ENCODE measurements at regions of chr4 and their contacts with region 1.

Region 1: DNA sequence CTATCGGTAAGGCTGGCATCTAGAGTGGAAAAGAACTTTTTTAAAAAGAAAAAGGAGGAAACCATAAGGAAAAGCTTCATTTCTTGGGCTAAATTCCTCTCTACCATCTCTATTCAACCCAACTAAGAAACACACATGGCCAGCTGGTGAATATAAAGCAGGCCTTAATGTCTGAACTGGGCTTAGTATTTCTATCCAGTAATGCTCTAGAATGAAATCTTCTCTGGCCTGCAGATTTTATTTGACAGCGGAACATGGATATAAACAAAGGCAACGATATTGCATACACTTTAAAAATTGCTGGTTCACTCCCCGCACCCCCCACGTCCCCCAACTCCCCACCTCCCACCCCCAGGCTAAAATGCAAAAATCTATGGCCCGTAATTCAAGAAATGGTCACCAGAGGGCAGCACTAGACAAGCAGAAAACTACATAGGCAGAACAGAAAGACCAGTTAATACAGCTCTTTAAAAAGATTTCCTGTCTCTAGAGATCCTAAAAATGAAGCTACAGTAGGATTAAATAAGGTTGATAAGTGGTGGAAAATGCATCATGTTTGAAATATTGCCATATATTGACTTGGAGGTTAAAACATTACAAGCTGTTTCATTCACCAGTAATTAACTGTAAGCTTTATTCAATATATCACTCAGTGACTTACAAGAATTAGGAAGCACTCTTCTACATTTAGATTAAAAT is 155.2 kb upstream of the GALNT7 start:
- DNase-seq: peak in 4 of 5 donors; percentile 16 to 51 (median 30)
- H3K4me3 ChIP-seq: no peak overlapping the region
- H3K27ac ChIP-seq: no peak overlapping the region
- H3K4me1 ChIP-seq: no peaks in the 10 kb centered on the region
- H3K27me3 ChIP-seq: no peaks in the 10 kb centered on the region
- CTCF ChIP-seq: peak in 2 of 3 donors; percentile 45 to 59
- EP300 ChIP-seq: no peak
- POLR2A ChIP-seq: no peak

Region 2: DNA sequence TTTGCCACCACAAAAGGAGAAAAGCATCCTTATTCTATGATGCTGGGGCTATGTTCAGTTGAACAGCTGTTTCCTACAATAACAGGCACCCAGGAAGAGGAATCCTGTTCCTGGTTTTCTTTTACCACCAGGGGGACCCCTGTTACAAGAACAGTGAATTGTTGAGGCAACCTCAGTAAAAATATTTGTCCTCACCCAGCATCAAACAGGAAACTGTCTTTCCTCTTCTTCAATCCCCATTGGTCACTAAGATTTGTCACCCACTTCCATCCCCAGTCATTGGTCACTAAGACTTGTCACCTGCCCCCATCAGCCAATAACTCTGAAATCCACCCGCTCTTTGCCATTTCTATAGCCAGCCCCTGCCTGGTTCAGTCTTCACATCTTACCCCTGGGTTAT is 11.8 kb after region 1 on chr4:
- intact Hi-C with region 1: no loop called
- DNase-seq: peak in 2 of 5 donors; percentile 39 to 66
- H3K4me3 ChIP-seq: no peak overlapping the region
- H3K27ac ChIP-seq: no peak overlapping the region
- H3K4me1 ChIP-seq: no peaks in the 10 kb centered on the region
- H3K27me3 ChIP-seq: no peaks in the 10 kb centered on the region
- CTCF ChIP-seq: peak; percentile 33 to 69 (median 61)
- EP300 ChIP-seq: no peak
- POLR2A ChIP-seq: no peak

Region 3: GRCh38 chr4:173257732-173258717 is 244.6 kb after region 1 on chr4:
- intact Hi-C with region 1: loop called in 3 of 4 experiments (anchors 5 to 10 kb)
- DNase-seq: peak; percentile 52 to 72 (median 71)
- H3K4me3 ChIP-seq: no peak overlapping the region
- H3K27ac ChIP-seq: no peak overlapping the region
- H3K4me1 ChIP-seq: no peaks in the 10 kb centered on the region
- H3K27me3 ChIP-seq: no peaks in the 10 kb centered on the region
- CTCF ChIP-seq: peak; percentile 19 to 57 (median 44)
- EP300 ChIP-seq: no peak
- POLR2A ChIP-seq: no peak

Region 4: DNA sequence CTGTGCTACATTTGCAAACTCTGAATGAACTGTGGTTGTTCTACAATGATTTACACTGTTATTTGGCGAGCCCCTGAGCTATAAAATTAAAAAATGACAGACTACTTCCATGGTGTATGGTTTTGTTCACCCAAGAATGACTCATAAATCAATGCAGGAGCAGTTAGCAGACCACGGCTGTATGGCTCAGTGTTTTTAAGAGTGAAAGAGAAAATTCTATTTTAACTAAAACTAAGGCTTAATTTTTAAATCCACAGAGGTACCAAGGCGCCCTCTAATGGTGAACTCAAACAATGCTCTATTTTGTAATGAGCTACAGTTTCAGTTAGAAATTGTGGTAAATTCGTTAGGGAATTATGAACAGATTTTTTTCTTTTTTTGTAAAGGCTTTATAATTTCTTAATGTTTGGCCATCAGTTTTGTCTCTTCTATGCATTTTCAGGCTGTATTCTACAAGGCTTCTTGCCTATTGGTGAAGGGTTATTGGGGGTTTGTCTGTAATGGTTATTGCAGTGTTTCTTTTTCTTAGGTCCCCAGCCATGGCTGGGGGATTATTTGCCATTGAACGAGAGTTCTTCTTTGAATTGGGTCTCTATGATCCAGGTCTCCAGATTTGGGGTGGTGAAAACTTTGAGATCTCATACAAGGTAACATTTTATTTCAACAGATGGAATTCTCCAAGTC is 288.3 kb after region 1 on chr4:
- intact Hi-C with region 1: loop called in 2 of 4 experiments (anchors 5 to 10 kb)
- DNase-seq: no peak
- H3K4me3 ChIP-seq: no peak overlapping the region
- H3K27ac ChIP-seq: no peak overlapping the region
- H3K4me1 ChIP-seq: no peaks in the 10 kb centered on the region
- H3K27me3 ChIP-seq: no peaks in the 10 kb centered on the region
- CTCF ChIP-seq: peak; percentile 49 to 61 (median 50)
- EP300 ChIP-seq: no peak
- POLR2A ChIP-seq: no peak

Region 5: DNA sequence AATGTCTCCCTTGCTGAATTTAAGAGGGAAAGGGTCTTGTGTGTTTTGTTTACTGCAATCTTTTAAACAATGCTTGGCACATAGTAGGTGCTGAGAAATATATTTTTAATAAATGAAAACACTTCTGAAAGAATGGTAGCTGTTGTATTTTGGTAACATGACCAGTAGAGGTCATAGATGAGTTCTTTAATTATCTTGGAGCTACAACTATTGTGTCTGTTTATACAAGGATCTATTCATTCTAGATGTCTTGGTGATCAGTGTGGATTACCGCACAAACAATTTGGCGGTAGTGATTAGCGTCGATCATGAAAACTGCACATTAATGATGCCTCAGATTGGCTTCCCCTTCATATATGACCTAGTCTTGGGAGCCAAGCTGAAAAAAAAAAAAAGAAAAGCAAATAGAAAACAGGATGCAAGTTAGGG is 407.0 kb after region 1 on chr4:
- intact Hi-C with region 1: loop called in 2 of 4 experiments (anchors 5 to 10 kb)
- DNase-seq: no peak
- H3K4me3 ChIP-seq: no peak overlapping the region
- H3K27ac ChIP-seq: no peak overlapping the region
- H3K4me1 ChIP-seq: no peaks in the 10 kb centered on the region
- H3K27me3 ChIP-seq: no peaks in the 10 kb centered on the region
- CTCF ChIP-seq: peak in 1 of 3 donors; percentile 31
- EP300 ChIP-seq: no peak
- POLR2A ChIP-seq: no peak